ENCODE measurements at regions of chr14 and their contacts with region 1.

Region 1: GRCh38 chr14:64540208-64541157 is at the start of gene HSPA2:
- DNase-seq: peak; percentile 87 to 94 (median 91)
- ATAC-seq: peak; percentile 94
- H3K4me3 ChIP-seq: peak within 1 kb of the TSS; percentile 90
- H3K4me3 Mint-ChIP-seq: peak within 1 kb of the TSS; percentile 87 to 98 (median 94)
- H3K27ac ChIP-seq: peak within 1 kb of the TSS; percentile 53
- H3K27ac Mint-ChIP-seq: peak within 1 kb of the TSS; percentile 61 to 95 (median 81)
- H3K4me1 ChIP-seq: peaks cover 4 to 9% of the 10 kb centered on the region in 2 donors
- H3K4me1 Mint-ChIP-seq: peaks cover 21 to 44% (median 34%) of the 10 kb centered on the region in 7 donors
- H3K27me3 ChIP-seq: no peaks in the 10 kb centered on the region
- H3K27me3 Mint-ChIP-seq: peaks cover 0 to 54% (median 3%) of the 10 kb centered on the region in 5 donors
- total RNA-seq, gene HSPA2: 0.32 to 2.5 (median 0.76) TPM

Region 2: GRCh38 chr14:63852817-63853731 is 687.4 kb before region 1 on chr14 and contains the start of gene SYNE2:
- CTCF ChIA-PET with region 1: no interaction called
- POLR2A ChIA-PET with region 1: no interaction called
- intact Hi-C with region 1: loop called in 1 of 2 experiments (anchors 2 kb)
- DNase-seq: peak; percentile 67 to 89 (median 80)
- ATAC-seq: peak; percentile 90
- H3K4me3 ChIP-seq: peak within 1 kb of the TSS; percentile 52
- H3K4me3 Mint-ChIP-seq: peak within 1 kb of the TSS; percentile 85 to 99 (median 98)
- H3K27ac ChIP-seq: peak within 1 kb of the TSS; percentile 72
- H3K27ac Mint-ChIP-seq: peak within 1 kb of the TSS; percentile 77 to 98 (median 91)
- H3K4me1 ChIP-seq: peaks cover 29 to 39% of the 10 kb centered on the region in 2 donors
- H3K4me1 Mint-ChIP-seq: peaks cover 30 to 44% (median 42%) of the 10 kb centered on the region in 7 donors
- H3K27me3 ChIP-seq: no peaks in the 10 kb centered on the region
- H3K27me3 Mint-ChIP-seq: peaks cover 0 to 25% (median 0%) of the 10 kb centered on the region in 5 donors
- total RNA-seq, gene SYNE2: 77.7 to 170 (median 149) TPM

Region 3: DNA sequence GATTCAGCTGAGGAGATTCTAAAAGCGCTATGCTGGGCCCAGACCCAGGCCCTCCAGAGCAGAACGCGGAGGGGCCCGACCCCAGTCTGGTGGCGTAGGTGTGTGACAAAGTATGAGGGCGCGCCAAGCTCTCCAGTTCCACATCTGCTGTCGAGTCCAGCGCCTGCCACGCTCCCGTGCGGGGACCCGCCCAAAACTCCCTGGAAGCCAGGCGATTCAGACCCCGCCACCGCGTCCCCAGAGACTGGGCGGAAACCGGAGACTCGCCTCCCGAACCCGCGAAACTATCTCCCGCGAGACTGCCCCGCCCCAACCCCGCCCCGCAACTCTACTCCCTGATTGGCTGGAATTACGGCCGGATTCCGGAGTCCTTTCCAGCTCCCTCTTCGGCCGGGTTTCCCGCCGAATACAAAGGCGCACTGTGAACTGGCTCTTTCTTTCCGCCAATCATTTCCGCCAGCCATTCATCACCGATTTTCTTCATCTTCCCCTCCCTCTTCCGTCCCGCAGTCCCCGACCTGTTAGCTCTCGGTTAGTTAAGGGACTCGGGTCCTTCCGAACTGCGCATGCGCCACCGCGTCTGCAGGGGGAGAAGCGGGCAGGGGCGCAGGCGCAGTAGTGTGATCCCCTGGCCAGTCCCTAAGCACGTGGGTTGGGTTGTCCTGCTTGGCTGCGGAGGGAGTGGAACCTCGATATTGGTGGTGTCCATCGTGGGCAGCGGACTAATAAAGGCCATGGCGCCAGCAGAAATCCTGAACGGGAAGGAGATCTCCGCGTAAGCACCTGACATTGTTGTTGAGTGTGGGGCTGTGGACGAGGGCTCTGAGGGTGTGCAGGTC is 152.6 kb before region 1 on chr14 and contains the start of gene MTHFD1:
- CTCF ChIA-PET with region 1: no interaction called
- POLR2A ChIA-PET with region 1: no interaction called
- intact Hi-C with region 1: loop called (anchors 1 kb)
- DNase-seq: peak; percentile 93 to 97 (median 96)
- ATAC-seq: peak; percentile 90
- H3K4me3 ChIP-seq: peak within 1 kb of the TSS; percentile 89
- H3K4me3 Mint-ChIP-seq: peak within 1 kb of the TSS; percentile 92 to 99 (median 96)
- H3K27ac ChIP-seq: peak within 1 kb of the TSS; percentile 79
- H3K27ac Mint-ChIP-seq: peak within 1 kb of the TSS; percentile 90 to 99 (median 95)
- H3K4me1 ChIP-seq: peaks cover 11 to 17% of the 10 kb centered on the region in 2 donors
- H3K4me1 Mint-ChIP-seq: peaks cover 18 to 49% (median 41%) of the 10 kb centered on the region in 7 donors
- H3K27me3 ChIP-seq: no peaks in the 10 kb centered on the region
- H3K27me3 Mint-ChIP-seq: peaks cover 0 to 4% (median 0%) of the 10 kb centered on the region in 5 donors
- total RNA-seq, gene MTHFD1: 28.0 to 189 (median 30.2) TPM

Region 4: DNA sequence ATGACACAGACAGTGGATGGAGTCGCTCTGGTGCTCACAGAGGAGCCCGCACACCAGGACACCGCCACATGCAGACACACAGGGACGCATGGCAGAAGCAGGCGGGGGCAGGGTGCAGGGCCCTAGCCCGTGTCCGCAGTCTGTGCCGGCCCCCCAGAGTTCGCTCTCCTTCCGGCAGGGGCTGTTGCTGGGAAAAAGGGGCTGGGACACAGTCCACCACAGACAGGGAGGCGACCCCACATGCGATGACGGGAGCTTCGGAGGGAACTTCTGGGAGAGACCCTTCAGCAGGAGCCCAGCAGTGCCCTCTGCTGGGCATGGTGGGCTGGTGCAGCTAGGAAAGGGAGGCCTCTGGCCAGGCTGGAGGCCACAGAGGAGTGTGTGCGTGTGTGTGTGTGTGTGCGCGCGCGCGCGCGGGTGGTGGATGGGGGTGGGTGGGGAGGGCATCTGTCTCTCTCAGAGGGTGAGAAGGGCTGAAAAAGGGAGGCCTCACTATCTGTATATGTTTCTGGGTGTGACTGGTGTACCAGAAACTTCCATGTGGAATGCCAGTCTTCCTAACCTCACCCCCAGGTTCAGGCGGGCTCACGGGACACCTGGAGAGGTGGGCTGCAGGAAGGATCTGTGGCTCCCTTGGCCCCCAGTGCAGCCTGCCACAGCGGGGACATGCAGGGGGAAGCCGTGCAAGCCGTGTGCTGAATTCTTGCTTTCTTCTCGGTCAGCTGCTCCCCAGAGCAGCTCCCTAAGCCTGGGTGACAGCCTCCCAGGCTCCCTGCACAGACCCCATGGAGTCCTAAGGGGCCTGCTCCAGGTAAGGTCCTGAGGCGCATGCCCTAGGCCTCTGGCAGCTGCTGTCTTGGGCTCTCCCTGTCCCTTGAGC is 224.4 kb after region 1 on chr14:
- CTCF ChIA-PET with region 1: no interaction called
- POLR2A ChIA-PET with region 1: no interaction called
- intact Hi-C with region 1: loop called in 1 of 2 experiments (anchors 1 kb)
- DNase-seq: peak; percentile 33 to 71 (median 59)
- ATAC-seq: peak; percentile 86
- H3K4me3 ChIP-seq: peak overlapping the region; percentile 39
- H3K4me3 Mint-ChIP-seq: peak overlapping the region in 9 of 10 donors; percentile 36 to 78 (median 65)
- H3K27ac ChIP-seq: no peak overlapping the region
- H3K27ac Mint-ChIP-seq: peak overlapping the region in 3 of 9 donors; percentile 48 to 62 (median 49)
- H3K4me1 ChIP-seq: peaks cover 0 to 31% of the 10 kb centered on the region in 2 donors
- H3K4me1 Mint-ChIP-seq: peaks cover 2 to 44% (median 23%) of the 10 kb centered on the region in 7 donors
- H3K27me3 ChIP-seq: no peaks in the 10 kb centered on the region
- H3K27me3 Mint-ChIP-seq: peaks cover 0 to 21% (median 0%) of the 10 kb centered on the region in 5 donors

Region 5: DNA sequence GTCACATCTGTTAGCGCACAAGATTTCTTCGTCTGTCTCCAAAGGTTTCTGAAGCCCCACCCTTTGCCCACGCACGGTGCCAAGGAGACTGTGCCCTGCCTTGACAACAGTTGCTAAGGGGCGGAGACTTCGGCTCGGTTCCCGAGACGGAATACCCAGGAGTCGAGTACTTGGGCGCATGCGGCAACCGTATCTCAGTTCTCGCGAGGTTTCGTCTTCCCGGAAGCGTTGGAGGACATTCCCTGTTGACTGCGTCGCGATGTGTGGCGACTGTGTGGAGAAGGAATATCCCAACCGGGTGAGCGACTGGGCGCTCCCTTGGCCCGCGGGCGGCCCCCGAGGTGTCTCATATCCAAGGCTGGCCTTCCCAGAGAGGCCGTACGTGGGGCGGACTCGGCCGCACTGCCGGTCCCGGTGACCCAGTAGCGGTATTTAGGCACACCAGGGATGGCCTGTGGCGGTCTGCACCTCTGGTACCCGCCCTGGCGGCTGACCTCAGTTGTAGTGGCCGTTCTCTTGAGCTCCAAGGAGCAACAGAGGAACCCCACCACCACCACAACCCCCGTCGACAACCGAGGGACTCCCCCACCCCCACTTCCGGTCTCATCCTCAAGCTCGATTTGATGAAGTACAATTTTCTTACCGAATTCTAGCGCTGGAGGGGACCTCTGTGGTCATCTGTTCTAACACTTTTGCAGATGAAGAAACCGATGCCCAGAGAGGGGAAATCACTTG is 373.9 kb after region 1 on chr14 and contains the start of gene CHURC1:
- CTCF ChIA-PET with region 1: no interaction called
- POLR2A ChIA-PET with region 1: no interaction called
- intact Hi-C with region 1: loop called (anchors 1 to 5 kb)
- DNase-seq: peak; percentile 83 to 99 (median 94)
- ATAC-seq: peak; percentile 98
- H3K4me3 ChIP-seq: peak within 1 kb of the TSS; percentile 96
- H3K4me3 Mint-ChIP-seq: peak within 1 kb of the TSS; percentile 87 to 97 (median 92)
- H3K27ac ChIP-seq: peak within 1 kb of the TSS; percentile 99
- H3K27ac Mint-ChIP-seq: peak within 1 kb of the TSS; percentile 93 to 99 (median 97)
- H3K4me1 ChIP-seq: peaks cover 33 to 37% of the 10 kb centered on the region in 2 donors
- H3K4me1 Mint-ChIP-seq: peaks cover 42 to 60% (median 51%) of the 10 kb centered on the region in 7 donors
- H3K27me3 ChIP-seq: no peaks in the 10 kb centered on the region
- H3K27me3 Mint-ChIP-seq: peaks cover 0 to 13% (median 0%) of the 10 kb centered on the region in 5 donors
- total RNA-seq, gene CHURC1: 71.9 to 117 (median 80.7) TPM

Region 6: DNA sequence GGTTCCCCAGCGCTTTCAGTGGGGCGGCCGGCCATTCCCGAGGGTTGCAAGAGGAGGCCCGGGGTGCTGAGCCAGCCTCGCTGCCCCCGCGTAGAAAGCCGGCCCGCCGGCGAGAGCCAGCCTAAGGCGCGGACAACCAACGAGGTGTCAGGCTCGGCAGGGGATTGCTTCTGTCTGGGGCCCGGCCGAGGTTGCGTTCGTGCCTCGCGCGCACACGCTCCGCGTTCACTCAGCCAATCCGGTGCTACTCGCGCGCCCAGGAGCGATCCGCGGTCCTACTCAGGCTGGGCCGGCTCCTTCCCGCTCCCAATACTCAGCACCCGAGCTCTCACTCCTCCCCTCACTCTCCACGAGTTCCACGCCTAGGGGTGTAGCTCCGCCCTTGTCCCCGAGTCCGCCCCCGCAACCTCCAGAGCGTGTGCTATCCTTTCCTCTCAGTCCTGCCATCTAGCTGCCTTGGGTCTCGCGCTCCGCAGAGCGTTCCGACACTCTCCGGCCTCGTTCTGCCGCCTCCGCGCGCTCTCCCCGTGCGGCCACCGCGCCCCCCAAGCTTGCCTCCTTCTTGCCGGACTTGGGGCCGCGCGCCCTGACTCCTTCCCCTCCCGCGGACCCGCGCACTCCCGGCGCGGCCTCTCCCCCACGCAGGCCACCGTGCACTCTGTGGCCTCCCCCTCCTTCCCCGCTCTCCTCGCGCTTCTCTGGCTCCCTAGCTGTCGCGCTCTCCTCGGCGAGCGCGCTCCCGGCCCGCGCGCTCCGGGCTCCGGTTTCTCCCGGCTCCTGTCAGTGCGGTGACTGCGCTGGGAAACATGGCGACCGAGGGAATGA is 1967.5 kb after region 1 on chr14 and contains the start of gene GPHN:
- CTCF ChIA-PET with region 1: no interaction called
- POLR2A ChIA-PET with region 1: no interaction called
- intact Hi-C with region 1: loop called in 1 of 2 experiments (anchors 5 kb)
- DNase-seq: peak; percentile 62 to 87 (median 82)
- ATAC-seq: peak; percentile 93
- H3K4me3 ChIP-seq: peak within 1 kb of the TSS; percentile 78
- H3K4me3 Mint-ChIP-seq: peak within 1 kb of the TSS; percentile 94 to 100 (median 99)
- H3K27ac ChIP-seq: peak within 1 kb of the TSS; percentile 70
- H3K27ac Mint-ChIP-seq: peak within 1 kb of the TSS; percentile 71 to 96 (median 91)
- H3K4me1 ChIP-seq: peaks cover 6 to 7% of the 10 kb centered on the region in 2 donors
- H3K4me1 Mint-ChIP-seq: peaks cover 16 to 42% (median 34%) of the 10 kb centered on the region in 7 donors
- H3K27me3 ChIP-seq: no peaks in the 10 kb centered on the region
- H3K27me3 Mint-ChIP-seq: peaks cover 0 to 29% (median 0%) of the 10 kb centered on the region in 5 donors
- total RNA-seq, gene GPHN: 11.8 to 28.1 (median 14.8) TPM